ENCODE measurements at regions of chr6 and their contacts with region 1.

Region 1: DNA sequence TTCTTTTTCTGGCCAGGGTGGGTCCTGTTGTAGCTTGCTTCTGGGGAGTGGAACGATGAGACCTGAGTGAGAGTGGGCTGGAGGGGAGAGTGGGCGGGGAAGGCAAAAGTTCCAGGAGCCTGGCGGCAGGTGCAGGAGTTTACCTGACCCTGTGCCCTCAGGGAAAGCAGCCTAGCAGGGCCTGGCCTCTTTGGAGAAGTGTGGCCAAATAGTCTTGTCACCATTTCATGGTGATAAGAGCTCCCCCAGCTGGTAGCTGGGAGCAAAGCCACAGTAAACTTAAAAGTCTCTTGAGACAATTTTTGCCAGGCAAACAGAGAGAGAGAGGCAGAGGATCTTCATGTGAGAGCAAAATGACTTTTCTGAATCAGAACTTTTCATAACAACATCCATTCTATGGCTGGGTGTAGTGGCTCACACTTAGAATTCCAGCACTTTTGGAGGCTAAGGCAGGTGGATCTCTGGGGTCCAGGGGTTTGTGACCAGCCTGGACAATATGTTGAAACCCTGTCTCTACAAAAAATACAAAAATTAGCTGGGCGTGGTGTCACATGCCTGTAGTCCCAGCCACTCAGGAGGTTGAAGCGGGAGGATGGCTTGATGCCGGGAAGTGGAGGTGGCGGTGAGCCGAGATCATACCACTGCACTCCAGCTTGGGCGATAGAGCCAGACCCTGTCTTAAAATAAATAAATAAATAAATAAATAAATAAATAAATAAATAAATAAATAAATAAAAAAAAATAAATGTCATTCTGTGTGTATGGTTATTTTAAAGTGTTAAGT is 161.8 kb upstream of the SCGN start:
- DNase-seq: peak; percentile 86
- H3K4me3 ChIP-seq: no peak overlapping the region
- H3K27ac ChIP-seq: no peak overlapping the region
- H3K4me1 ChIP-seq: peaks cover 3% of the 10 kb centered on the region
- H3K27me3 ChIP-seq: no peaks in the 10 kb centered on the region
- CTCF ChIP-seq: peak; percentile 81

Region 2: GRCh38 chr6:25278914-25279747 is 211.1 kb before region 1 on chr6 and contains the start of gene CARMIL1:
- intact Hi-C with region 1: loop called (anchors 5 kb)
- DNase-seq: peak; percentile 94
- H3K4me3 ChIP-seq: peak within 1 kb of the TSS; percentile 74
- H3K27ac ChIP-seq: peak within 1 kb of the TSS; percentile 83
- H3K4me1 ChIP-seq: no peaks in the 10 kb centered on the region
- H3K27me3 ChIP-seq: no peaks in the 10 kb centered on the region
- CTCF ChIP-seq: peak; percentile 59
- total RNA-seq, gene CARMIL1: 38.6 to 50.2 TPM

Region 3: GRCh38 chr6:25601800-25602673 is 111.8 kb after region 1 on chr6:
- intact Hi-C with region 1: loop called (anchors 10 kb)
- DNase-seq: no peak
- H3K4me3 ChIP-seq: no peak overlapping the region
- H3K27ac ChIP-seq: no peak overlapping the region
- H3K4me1 ChIP-seq: peaks cover 3% of the 10 kb centered on the region
- H3K27me3 ChIP-seq: no peaks in the 10 kb centered on the region
- CTCF ChIP-seq: peak; percentile 47

Measured in colonic mucosa (tissue), 4 donors.